ENCODE measurements at regions of chr12 and their contacts with region 1.

Region 1: GRCh38 chr12:88241862-88242570 is 99.9 kb downstream of the TMTC3 start:
- DNase-seq: peak; percentile 50
- ATAC-seq: peak; percentile 95
- H3K4me3 Mint-ChIP-seq: no peak overlapping the region
- H3K27ac Mint-ChIP-seq: peak overlapping the region; percentile 69
- H3K4me1 Mint-ChIP-seq: peaks cover 25% of the 10 kb centered on the region
- H3K27me3 Mint-ChIP-seq: peaks cover 3% of the 10 kb centered on the region
- CTCF ChIP-seq: no peak

Region 2: DNA sequence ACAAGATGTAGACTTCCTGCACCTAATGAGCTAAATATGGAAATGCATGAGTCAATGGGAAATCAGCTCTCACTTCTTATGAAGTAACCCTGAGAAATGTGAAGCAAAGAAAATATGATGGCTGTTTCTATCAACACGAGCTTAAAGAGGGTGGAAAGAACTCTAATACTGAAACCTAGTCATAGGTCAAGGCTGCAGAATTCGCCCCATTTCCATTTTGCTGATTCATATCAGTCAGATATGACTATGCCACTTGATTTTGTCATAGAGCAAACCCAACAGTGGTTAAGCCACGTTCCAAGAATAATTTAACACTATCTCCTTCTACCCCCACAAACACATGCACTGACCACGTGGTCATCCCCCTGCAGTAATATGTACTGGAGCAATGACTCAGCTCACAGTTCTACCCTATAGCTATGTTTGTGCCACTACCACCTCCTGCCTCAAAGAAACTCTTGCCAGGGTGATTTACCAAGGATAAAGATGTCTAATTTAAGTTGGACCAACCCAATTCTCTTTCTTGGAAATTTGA is 57.6 kb after region 1 on chr12:
- CTCF ChIA-PET with region 1: interaction called, 3 read pairs
- POLR2A ChIA-PET with region 1: no interaction called
- intact Hi-C with region 1: loop called (anchors 2 kb)
- DNase-seq: peak; percentile 76
- ATAC-seq: peak; percentile 90
- H3K4me3 Mint-ChIP-seq: no peak overlapping the region
- H3K27ac Mint-ChIP-seq: peak overlapping the region; percentile 80
- H3K4me1 Mint-ChIP-seq: peaks cover 20% of the 10 kb centered on the region
- H3K27me3 Mint-ChIP-seq: peaks cover 4% of the 10 kb centered on the region
- CTCF ChIP-seq: no peak

Region 3: GRCh38 chr12:88393017-88393767 is 151.2 kb after region 1 on chr12:
- CTCF ChIA-PET with region 1: no interaction called
- POLR2A ChIA-PET with region 1: no interaction called
- intact Hi-C with region 1: no loop called
- DNase-seq: no peak
- ATAC-seq: peak; percentile 30
- H3K4me3 Mint-ChIP-seq: no peak overlapping the region
- H3K27ac Mint-ChIP-seq: no peak overlapping the region
- H3K4me1 Mint-ChIP-seq: no peaks in the 10 kb centered on the region
- H3K27me3 Mint-ChIP-seq: peaks cover 1% of the 10 kb centered on the region
- CTCF ChIP-seq: peak; percentile 26

Measured in activated CD8-positive, alpha-beta T cell treated with anti-CD3 and anti-CD28 coated beads for 36 hours (primary cell).